GM10248 (cell line): ENCODE measurements at regions of chr1 and their contacts with region 1.

Region 1: DNA sequence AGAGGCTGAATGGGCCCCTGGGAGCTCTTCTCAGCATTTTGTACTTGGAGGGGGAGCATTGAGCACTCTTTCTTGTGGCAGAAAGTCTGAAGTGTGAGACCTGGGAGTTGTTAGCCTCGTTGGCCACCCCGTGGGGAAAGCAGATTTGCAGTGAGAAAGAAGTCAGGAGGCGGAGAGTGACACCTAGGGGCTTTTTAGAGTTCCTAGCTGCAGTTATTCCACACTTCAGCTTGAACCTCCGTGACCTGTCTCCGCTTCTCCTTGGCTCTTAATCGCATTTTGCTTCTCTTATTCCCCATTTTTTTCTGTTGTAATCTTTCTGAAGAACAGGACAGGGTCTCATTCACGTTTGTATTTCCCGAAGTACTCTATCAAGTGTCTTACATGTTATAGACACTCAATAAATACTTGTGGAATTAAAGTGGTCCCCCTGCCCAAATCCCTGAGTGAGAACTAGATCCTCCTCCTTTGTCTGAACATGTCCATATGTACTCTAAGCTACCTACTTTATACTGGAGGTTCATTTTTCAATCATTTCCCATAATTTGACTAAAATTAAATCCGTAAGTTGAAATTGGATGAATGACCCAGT is 14.5 kb upstream of the C1orf141 start:
- DNase-seq: peak; percentile 73
- CTCF ChIP-seq: peak; percentile 65

Region 2: GRCh38 chr1:66758241-66758755 is 391.0 kb before region 1 on chr1:
- CTCF ChIA-PET with region 1: interaction called, 40 read pairs
- POLR2A ChIA-PET with region 1: no interaction called
- DNase-seq: peak; percentile 56
- CTCF ChIP-seq: no peak

Region 3: GRCh38 chr1:66996018-66996682 is 153.1 kb before region 1 on chr1:
- CTCF ChIA-PET with region 1: interaction called, 55 read pairs
- POLR2A ChIA-PET with region 1: no interaction called
- DNase-seq: peak; percentile 58
- CTCF ChIP-seq: peak; percentile 88

Region 4: DNA sequence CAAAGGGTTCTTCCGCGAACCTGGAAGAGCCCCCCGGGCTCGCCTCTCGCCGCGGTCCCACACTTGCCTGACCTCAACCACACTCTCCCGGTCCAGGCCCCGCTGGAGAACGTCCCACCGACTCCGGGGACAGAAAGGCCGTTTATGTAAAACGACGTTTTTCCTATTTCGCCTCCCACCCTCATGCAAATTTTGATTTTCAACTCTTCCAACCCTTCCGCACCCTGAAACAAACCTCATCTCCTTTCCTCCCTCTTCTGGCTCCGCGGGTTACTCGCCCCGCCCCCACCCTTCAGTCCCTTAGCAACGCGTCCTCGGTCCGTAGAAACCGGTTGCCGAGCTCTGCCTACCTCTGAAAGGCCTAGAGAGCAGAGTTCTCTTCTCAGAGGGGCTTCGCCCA is 14.6 kb before region 1 on chr1 and contains the start of gene C1orf141:
- CTCF ChIA-PET with region 1: interaction called, 17 read pairs
- POLR2A ChIA-PET with region 1: no interaction called
- DNase-seq: no peak
- CTCF ChIP-seq: no peak

Region 5: GRCh38 chr1:67171978-67172377 is 22.7 kb after region 1 on chr1:
- CTCF ChIA-PET with region 1: interaction called, 21 read pairs
- POLR2A ChIA-PET with region 1: no interaction called
- DNase-seq: no peak
- CTCF ChIP-seq: no peak

Region 6: GRCh38 chr1:67227196-67227595 is 77.9 kb after region 1 on chr1:
- CTCF ChIA-PET with region 1: no interaction called
- POLR2A ChIA-PET with region 1: no interaction called
- DNase-seq: no peak
- CTCF ChIP-seq: no peak

Region 7: DNA sequence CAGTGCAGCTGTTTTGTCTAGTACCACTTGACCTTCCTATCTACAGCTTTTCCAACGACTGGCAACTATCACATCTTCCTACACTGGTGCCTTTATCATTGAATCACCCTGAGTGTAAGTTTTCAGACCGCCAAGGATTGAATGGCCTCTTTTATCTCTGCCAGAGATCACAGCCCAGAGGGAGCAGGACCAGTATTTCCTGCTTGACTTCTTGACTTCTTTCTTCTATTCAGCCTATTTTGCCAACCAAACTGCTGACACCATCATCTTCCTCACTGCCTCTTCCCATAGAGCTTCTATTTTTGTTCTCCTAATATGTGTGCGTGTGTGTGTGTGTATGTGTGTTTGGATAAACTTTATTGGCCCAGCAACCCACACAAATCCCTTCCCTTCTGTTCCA is 227.1 kb after region 1 on chr1:
- CTCF ChIA-PET with region 1: no interaction called
- POLR2A ChIA-PET with region 1: no interaction called
- DNase-seq: no peak
- CTCF ChIP-seq: no peak